Astrocyte of the cerebellum (primary cell): ENCODE measurements at regions of chr17 and their contacts with region 1.

Region 1: DNA sequence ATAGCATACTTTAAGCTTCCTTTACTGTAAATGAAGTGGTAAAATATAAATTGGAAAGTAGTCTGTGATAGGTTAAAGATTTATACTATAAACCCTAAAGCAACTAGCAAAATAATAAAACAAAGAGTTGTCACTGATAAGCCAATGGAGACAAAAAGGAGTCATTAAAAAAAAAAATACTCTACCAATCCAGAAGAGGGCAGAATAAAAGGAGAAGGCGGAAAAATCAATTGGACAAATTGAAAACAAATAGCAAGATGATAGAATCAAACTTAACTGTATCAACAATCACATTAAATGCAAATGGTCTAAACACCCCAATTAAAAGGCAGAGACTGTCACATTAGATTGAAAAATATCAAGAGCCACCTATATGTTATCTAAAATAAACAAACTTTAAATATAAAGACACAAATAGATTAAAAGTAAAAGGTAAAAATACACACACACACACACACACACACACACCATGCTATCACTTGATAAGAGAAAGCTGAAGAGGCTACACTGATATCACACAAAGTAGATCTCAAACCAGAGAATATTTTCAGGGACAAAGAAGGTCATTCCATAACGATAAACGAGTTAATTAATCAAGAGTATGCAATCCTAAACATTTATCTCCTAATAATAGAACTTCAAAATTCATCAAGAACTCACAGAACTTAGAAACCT is 71.8 kb downstream of the CACNG1 start:
- DNase-seq: no peak
- H3K4me3 ChIP-seq: no peak overlapping the region
- CTCF ChIP-seq: no peak

Region 2: DNA sequence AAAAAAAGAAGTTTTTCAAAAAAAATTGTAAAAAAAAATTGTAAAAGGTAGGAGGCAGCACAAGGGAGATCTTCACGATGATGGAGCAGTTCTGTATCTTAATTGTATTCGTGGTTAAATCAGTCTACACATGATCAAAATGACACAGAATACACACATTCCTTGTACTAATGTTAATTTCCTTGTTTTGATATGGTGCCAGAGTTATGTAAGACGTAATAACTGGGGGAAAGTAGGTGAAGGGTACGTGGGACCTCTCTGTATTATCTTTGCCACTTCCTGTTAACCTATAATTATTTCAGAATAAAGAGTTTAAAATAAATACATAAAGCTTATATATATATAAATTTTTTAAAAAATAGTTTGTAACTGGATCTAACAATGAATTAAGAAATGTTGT is 92.0 kb after region 1 on chr17:
- in situ Hi-C with region 1: loop called (anchors 5 kb)
- DNase-seq: no peak
- H3K4me3 ChIP-seq: no peak overlapping the region
- CTCF ChIP-seq: no peak